Colonic mucosa (tissue), 4 donors: ENCODE measurements at regions of chr11 and their contacts with region 1.

Region 1: DNA sequence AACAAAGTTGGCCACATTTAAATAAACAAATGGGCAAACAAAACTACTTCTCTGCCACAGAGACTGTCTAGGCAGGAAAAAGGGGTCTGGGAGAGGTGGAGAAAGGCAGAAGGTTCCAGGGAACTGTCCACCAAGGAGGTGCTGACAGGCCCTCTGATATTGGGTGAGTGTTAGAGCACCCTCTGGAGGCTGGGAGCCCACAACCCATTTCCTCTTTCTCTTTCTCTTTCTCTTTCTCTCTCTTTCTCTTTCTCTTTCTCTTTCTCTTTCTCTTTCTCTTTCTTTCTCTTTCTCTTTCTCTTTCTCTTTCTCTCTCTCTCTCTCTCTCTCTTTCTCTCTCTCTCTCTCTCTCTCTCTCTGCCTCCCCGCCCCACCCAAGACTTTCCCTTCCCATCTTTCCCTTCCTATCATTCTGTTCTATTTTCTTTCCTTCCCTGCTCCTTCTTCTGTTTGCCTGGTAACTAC is 912.8 kb downstream of the DLG2 start:
- DNase-seq: peak; percentile 76
- H3K4me3 ChIP-seq: no peak overlapping the region
- H3K27ac ChIP-seq: no peak overlapping the region
- H3K4me1 ChIP-seq: no peaks in the 10 kb centered on the region
- H3K27me3 ChIP-seq: no peaks in the 10 kb centered on the region
- CTCF ChIP-seq: peak; percentile 35

Region 2: DNA sequence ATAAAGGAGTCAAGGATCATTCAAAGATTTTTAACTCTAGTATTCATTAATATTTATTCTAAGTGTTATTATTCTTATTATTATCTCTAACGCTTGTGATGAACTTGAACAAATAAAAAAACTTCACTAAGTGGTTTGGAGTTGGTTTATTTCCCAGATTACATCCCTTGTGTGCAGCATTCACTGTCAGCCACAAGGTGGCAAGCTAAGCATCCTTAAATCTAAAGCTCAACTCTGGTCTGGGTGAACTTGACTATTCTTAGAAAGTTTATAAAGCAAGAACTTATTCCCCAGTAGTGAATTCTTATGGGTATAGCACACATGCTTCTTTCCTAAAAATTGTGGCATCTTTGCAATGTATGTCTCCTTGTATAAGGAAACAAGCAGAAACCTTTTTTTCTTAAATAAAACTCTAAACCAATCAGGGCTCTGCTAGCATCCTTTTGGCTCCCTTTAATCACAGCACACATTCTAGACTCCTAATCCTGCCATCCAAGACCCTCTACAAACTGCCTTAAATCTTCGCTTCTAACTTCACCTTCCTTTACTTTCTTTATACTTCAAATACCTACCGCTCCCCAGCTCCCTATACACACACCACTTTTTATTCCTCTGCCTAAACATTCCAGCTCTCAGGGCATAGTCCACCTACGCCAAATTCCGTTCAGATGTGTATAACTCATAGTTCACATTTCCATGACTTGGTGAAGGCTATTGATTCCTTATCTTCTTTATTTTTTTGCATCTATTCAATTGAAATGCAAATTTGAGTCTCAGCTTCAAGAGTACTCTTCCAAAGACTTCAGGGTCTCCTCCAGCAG is 156.1 kb before region 1 on chr11:
- intact Hi-C with region 1: loop called (anchors 2 kb)
- DNase-seq: peak; percentile 34
- H3K4me3 ChIP-seq: no peak overlapping the region
- H3K27ac ChIP-seq: no peak overlapping the region
- H3K4me1 ChIP-seq: no peaks in the 10 kb centered on the region
- H3K27me3 ChIP-seq: no peaks in the 10 kb centered on the region
- CTCF ChIP-seq: peak; percentile 89

Region 3: DNA sequence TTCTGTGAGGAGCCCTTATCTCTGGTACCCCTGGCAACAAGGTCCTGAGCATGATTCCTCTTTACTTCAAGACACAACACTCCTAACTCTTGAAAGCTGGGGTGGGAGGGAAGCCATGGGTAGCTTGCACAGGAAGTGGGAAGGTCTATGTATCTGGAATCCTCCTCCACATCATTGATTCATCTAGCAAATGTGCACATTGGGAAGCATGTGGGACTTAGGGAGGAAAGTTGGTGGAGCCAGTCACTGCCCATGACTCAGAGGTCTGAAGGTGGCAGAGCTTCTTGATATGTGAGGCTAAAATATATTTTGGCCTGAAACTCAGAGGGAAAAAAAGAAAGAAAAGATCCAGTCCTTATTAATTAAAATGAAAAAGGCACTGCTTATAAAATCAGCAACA is 88.1 kb before region 1 on chr11:
- intact Hi-C with region 1: loop called (anchors 10 kb)
- DNase-seq: no peak
- H3K4me3 ChIP-seq: no peak overlapping the region
- H3K27ac ChIP-seq: no peak overlapping the region
- H3K4me1 ChIP-seq: no peaks in the 10 kb centered on the region
- H3K27me3 ChIP-seq: no peaks in the 10 kb centered on the region
- CTCF ChIP-seq: no peak

Region 4: DNA sequence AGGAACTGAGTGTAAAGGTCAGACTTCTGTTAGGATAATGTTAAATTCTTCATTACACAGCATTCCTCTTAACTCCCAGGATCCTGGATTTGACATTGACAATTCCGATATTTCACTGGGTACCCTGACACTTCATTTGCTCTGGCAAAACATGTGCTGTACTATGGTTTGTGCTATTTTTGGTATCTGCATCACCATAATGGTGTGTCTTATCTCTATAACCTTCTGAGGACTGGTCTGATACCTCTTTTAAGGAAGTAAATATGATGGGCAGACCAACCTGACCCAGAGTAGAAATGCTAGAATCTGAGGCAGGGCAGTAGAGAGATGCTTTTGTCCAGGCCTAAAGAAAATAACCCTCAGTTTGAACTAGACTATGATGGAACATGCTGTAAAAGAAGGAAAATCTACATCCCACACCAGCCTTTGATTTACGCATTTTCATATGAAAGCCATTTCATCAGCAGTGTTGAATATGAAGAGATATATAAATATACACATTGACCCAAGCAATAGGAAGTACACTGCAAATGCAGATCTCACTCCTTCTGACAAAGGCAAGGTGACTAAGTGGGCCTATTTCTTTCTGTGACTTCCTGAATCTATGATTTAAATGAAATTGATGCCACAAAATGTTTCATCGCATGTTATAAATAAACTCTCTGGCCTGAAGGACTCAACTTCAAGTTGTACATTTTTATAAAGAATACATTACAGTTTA is 53.9 kb before region 1 on chr11:
- intact Hi-C with region 1: loop called (anchors 10 kb)
- DNase-seq: no peak
- H3K4me3 ChIP-seq: no peak overlapping the region
- H3K27ac ChIP-seq: no peak overlapping the region
- H3K4me1 ChIP-seq: no peaks in the 10 kb centered on the region
- H3K27me3 ChIP-seq: no peaks in the 10 kb centered on the region
- CTCF ChIP-seq: no peak